Activated CD8-positive, alpha-beta T cell treated with anti-CD3 and anti-CD28 coated beads, Interleukin-2, amount 10 ng/mL, durations not matched to agents 7 days and 5 days (primary cell): ENCODE measurements at regions of chr20 and their contacts with region 1.

Region 1: DNA sequence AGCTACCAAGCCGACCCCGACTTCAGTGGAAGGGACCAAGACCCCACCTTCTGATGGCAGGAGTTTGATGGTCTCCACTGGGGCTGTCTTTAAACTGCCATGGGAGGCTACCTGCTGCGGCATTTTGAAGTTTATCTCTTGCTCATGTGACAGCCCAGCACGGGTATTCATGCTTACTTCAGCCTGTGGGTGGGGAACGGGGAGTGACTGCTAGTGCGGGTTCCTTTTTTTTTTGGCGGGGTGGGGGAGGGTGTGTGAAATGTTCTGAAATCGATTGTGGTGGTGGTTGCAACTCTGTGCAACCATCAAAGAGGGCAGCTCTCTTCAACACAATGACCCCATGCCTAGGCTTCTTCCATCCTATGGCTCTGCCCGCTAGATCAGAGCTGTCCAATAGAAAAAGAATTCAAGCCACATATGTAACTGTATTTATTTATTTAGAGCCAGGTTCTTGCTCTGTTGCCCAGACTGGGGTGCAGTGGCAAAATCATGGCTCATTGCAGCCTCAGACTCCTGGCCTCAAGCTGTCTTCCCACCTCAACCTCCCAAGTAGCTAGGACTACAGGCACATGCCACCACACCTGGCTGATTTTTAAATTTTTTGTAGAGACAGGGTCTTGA is 53.7 kb downstream of the PPP1R16B start:
- DNase-seq: peak; percentile 50
- ATAC-seq: peak; percentile 55
- H3K4me3 Mint-ChIP-seq: peak overlapping the region; percentile 10
- H3K27ac Mint-ChIP-seq: peak overlapping the region; percentile 79
- H3K4me1 Mint-ChIP-seq: peaks cover 81% of the 10 kb centered on the region
- H3K27me3 Mint-ChIP-seq: no peaks in the 10 kb centered on the region

Region 2: GRCh38 chr20:38842558-38842981 is 16.6 kb before region 1 on chr20:
- CTCF ChIA-PET with region 1: interaction called, 17 read pairs
- POLR2A ChIA-PET with region 1: interaction called, 3 read pairs
- DNase-seq: peak; percentile 58
- ATAC-seq: peak; percentile 56
- H3K4me3 Mint-ChIP-seq: peak overlapping the region; percentile 64
- H3K27ac Mint-ChIP-seq: peak overlapping the region; percentile 77
- H3K4me1 Mint-ChIP-seq: peaks cover 74% of the 10 kb centered on the region
- H3K27me3 Mint-ChIP-seq: no peaks in the 10 kb centered on the region

Region 3: DNA sequence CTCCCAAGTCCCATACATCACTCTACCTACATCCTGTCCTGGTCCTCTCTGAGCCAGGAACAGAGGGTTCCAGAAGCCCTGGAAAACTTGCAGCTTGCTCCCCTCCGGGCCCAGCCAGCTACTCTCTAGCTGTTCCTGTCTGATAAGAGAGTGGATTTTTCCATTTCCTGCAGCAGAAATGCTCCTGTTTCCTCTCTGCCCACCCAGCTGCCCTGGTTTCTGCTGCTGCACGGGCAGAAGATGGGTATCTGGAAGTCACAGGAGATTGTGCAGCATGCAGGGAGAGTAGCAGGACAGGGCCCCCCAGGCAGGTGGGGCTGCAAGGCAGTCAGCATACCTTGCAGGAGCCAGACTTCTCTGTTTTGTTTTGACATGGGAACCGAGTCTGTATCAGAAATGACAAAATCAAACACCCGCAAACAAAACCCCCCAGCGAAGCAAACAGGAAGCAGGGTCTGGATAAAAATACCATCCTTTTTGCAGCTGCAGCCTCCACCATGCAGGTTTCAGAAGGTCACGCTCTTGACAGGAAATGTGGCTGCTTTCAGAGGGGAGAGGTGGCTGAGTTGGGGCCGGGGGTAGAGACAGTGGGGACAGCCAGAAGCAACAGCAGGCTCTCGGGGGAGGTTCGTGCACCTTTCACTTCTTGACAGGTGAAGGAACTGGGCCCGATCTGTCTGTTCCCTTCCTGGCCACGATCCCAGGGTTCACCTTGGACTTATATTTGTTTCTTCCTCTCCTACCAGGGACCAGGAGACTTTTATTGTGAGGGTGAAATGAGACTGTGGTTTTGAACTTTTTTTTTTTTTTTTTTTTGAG is 16.2 kb after region 1 on chr20:
- CTCF ChIA-PET with region 1: interaction called, 12 read pairs
- POLR2A ChIA-PET with region 1: interaction called, 5 read pairs
- DNase-seq: peak; percentile 80
- ATAC-seq: peak; percentile 53
- H3K4me3 Mint-ChIP-seq: peak overlapping the region; percentile 80
- H3K27ac Mint-ChIP-seq: peak overlapping the region; percentile 89
- H3K4me1 Mint-ChIP-seq: peaks cover 91% of the 10 kb centered on the region
- H3K27me3 Mint-ChIP-seq: no peaks in the 10 kb centered on the region

Region 4: GRCh38 chr20:38926142-38926933 is 67.2 kb after region 1 on chr20 and contains the start of gene FAM83D:
- CTCF ChIA-PET with region 1: no interaction called
- POLR2A ChIA-PET with region 1: no interaction called
- DNase-seq: peak; percentile 98
- ATAC-seq: peak; percentile 95
- H3K4me3 Mint-ChIP-seq: peak within 1 kb of the TSS; percentile 91
- H3K27ac Mint-ChIP-seq: peak within 1 kb of the TSS; percentile 84
- H3K4me1 Mint-ChIP-seq: peaks cover 38% of the 10 kb centered on the region
- H3K27me3 Mint-ChIP-seq: no peaks in the 10 kb centered on the region
- total RNA-seq, gene FAM83D: 24.9 to 25.6 TPM